Activated naive CD4-positive, alpha-beta T cell treated with anti-CD3 and anti-CD28 coated beads for 36 hours (primary cell): ENCODE measurements at regions of chrX and their contacts with region 1.

Region 1: GRCh38 chrX:130268500-130269170 is at the start of gene ZNF280C:
- DNase-seq: peak; percentile 95
- H3K4me3 Mint-ChIP-seq: peak within 1 kb of the TSS; percentile 85
- H3K27ac Mint-ChIP-seq: peak within 1 kb of the TSS; percentile 79
- H3K4me1 Mint-ChIP-seq: peaks cover 18% of the 10 kb centered on the region
- H3K27me3 Mint-ChIP-seq: no peaks in the 10 kb centered on the region
- total RNA-seq, gene ZNF280C: 3.9 to 4.0 TPM

Region 2: DNA sequence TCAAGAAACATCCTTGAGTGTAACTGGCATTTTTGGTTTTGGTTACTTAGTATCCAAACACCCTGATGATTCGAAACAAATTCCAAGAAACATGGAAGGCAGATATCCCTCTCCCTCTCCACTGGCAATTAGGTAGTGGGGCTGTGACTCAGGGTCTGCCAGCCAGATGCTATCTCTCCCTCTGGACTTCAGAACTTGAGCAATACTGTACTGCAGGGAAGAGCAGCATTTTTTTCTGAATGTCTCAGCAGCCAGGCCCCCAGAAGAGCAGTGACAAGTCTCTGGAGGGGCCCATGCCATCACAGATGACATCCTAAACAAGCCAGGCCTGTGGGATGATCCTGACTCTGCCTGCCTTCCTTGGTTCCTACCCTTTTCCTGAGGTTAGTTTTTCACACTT is 323.5 kb before region 1 on chrX:
- CTCF ChIA-PET with region 1: no interaction called
- intact Hi-C with region 1: no loop called
- DNase-seq: no peak
- H3K4me3 Mint-ChIP-seq: no peak overlapping the region
- H3K27ac Mint-ChIP-seq: no peak overlapping the region
- H3K4me1 Mint-ChIP-seq: no peaks in the 10 kb centered on the region
- H3K27me3 Mint-ChIP-seq: no peaks in the 10 kb centered on the region

Region 3: DNA sequence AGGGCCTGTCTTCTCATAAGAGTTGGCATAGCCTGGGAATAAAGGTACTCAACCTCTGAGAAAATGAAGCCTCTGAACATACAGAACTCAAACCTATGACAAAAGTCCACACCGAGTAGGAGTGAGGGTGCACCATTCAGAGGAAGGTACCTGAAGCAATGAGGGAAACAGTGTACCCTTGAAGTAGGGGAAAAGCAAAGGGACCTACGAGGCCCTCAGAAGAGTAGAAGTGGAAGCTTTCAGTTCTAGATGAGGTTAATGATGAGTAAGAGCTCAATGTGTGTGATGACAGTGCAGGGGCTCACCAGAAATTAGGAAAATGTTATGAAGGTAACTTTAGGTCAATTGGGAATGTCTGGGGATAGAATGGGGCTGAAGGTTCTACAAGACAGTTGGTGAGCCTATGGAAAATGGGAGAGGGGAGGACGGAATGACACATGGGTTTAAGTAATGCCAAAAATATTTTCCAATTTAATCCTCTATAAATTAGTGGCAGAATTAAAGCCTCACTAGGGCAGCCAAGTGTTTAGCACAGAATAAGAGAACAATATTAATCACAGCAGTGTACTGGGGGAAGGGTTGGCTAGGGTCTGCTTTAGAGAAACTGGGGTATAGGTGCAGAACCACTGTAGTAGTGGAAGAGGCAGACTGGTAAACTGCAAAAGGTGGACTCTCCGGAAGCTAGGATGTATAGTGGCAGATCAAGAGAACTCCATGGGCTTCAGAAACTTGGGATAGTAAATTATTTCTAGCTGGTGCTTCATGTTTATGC is 57.0 kb before region 1 on chrX:
- CTCF ChIA-PET with region 1: no interaction called
- intact Hi-C with region 1: loop called (anchors 1 kb)
- DNase-seq: no peak
- H3K4me3 Mint-ChIP-seq: peak overlapping the region; percentile 6
- H3K27ac Mint-ChIP-seq: peak overlapping the region; percentile 80
- H3K4me1 Mint-ChIP-seq: peaks cover 23% of the 10 kb centered on the region
- H3K27me3 Mint-ChIP-seq: no peaks in the 10 kb centered on the region

Region 4: GRCh38 chrX:130253916-130254315 is 14.7 kb before region 1 on chrX:
- CTCF ChIA-PET with region 1: no interaction called
- intact Hi-C with region 1: no loop called
- DNase-seq: no peak
- H3K4me3 Mint-ChIP-seq: no peak overlapping the region
- H3K27ac Mint-ChIP-seq: no peak overlapping the region
- H3K4me1 Mint-ChIP-seq: peaks cover 21% of the 10 kb centered on the region
- H3K27me3 Mint-ChIP-seq: no peaks in the 10 kb centered on the region

Region 5: GRCh38 chrX:130378008-130378669 is 109.5 kb after region 1 on chrX:
- CTCF ChIA-PET with region 1: no interaction called
- intact Hi-C with region 1: no loop called
- DNase-seq: no peak
- H3K4me3 Mint-ChIP-seq: no peak overlapping the region
- H3K27ac Mint-ChIP-seq: no peak overlapping the region
- H3K4me1 Mint-ChIP-seq: no peaks in the 10 kb centered on the region
- H3K27me3 Mint-ChIP-seq: no peaks in the 10 kb centered on the region

Region 6: DNA sequence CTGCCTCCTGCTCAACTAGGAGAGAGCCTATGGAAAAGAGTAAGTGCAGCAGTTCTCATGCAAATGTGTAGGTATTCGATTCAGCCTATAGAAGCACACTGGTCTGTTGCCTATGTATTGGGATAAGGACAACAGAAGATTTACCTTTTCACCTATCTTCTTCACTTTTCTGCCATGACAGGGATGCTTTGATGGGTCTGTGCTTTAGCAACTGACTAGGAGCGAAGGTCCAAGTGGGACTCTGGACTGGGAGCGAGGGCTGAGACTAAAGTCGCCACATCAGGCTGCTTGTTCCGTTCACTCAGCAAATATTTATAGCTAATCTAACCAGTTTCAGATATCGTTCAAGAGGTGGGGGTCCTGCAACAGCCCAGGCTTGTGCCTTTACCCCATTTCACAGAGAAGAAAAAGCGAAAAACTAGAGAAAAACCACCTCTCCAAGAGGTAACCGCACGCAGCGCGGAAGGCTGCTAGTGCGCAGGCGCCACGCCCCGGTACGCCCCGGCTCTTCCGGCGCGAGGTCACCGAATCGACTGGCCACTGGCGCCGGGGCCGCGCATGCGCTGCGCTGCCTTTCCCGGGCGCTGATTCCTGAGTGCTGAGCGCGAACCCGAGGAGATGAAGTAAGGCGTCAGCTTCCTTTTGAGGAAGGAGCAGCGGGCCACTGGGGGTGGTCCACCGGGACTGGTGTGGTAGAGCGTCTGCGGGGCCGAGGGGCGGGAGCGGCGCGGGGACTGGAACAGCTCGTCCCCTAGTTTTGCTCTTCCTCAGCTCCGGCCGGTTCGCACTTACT is 133.0 kb after region 1 on chrX and contains the start of gene RBMX2:
- CTCF ChIA-PET with region 1: no interaction called
- intact Hi-C with region 1: loop called (anchors 2 kb)
- DNase-seq: peak; percentile 63
- H3K4me3 Mint-ChIP-seq: peak within 1 kb of the TSS; percentile 83
- H3K27ac Mint-ChIP-seq: peak within 1 kb of the TSS; percentile 90
- H3K4me1 Mint-ChIP-seq: peaks cover 20% of the 10 kb centered on the region
- H3K27me3 Mint-ChIP-seq: no peaks in the 10 kb centered on the region
- total RNA-seq, gene RBMX2: 32.3 to 33.6 TPM

Region 7: GRCh38 chrX:130793966-130794365 is 525.3 kb after region 1 on chrX:
- CTCF ChIA-PET with region 1: no interaction called
- intact Hi-C with region 1: no loop called
- DNase-seq: no peak
- H3K4me3 Mint-ChIP-seq: no peak overlapping the region
- H3K27ac Mint-ChIP-seq: no peak overlapping the region
- H3K4me1 Mint-ChIP-seq: no peaks in the 10 kb centered on the region
- H3K27me3 Mint-ChIP-seq: no peaks in the 10 kb centered on the region

Region 8: DNA sequence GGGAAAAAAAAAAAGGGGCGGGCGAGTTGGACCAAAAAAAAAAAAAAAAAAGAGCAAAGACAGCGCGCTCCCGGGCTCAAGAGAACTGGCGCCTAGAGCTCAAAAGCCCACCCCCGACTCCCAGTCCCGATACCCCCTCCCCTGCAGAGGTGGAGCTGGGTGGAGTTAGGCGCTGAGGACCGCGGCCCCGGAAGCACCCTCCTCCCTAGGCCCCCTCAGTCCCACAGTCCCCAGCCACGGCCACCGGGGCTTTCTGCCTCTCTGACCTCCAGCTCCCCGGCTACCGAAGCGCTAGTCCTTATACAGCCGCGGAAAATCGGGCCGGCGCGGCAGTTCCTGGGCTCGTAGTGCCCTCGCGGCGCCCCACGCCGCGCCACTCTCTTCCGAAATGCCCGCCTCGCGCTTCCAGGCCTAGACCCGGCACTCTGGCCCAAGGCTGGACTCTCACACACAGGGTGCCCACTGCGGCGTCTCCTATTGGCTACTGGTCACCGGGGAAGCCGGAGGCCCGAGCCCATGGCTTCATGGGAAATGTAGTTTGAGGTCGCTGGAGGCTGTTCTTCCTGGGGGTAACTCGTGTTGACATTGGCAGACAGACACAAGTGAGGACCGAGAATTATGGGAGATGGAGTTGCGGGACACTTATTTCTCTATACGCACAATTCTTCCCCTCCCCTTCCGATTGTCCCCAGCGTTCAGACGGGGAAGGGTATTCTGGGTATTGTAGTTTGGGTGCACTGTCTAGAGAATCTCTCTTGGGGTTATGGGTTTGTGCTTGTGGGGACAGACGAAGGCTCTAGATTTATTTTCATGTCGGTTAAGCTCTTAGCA is 634.4 kb after region 1 on chrX and contains the start of gene ENOX2:
- CTCF ChIA-PET with region 1: no interaction called
- intact Hi-C with region 1: loop called (anchors 1 kb)
- DNase-seq: peak; percentile 84
- H3K4me3 Mint-ChIP-seq: no peak within 1 kb of the TSS
- H3K27ac Mint-ChIP-seq: no peak within 1 kb of the TSS
- H3K4me1 Mint-ChIP-seq: peaks cover 9% of the 10 kb centered on the region
- H3K27me3 Mint-ChIP-seq: no peaks in the 10 kb centered on the region
- total RNA-seq, gene ENOX2: 8.7 to 9.7 TPM